Mammary epithelial cell (primary cell): ENCODE measurements at regions of chr6 and their contacts with region 1.

Region 1: GRCh38 chr6:156662025-156662445 is 115.1 kb upstream of the ARID1B start:
- DNase-seq: peak; percentile 74
- H3K4me3 ChIP-seq: peak overlapping the region; percentile 32 to 42 (median 36)
- H3K27ac ChIP-seq: no peak overlapping the region
- H3K4me1 ChIP-seq: peaks cover 3% of the 10 kb centered on the region
- H3K27me3 ChIP-seq: peaks cover 2% of the 10 kb centered on the region
- CTCF ChIP-seq: peak; percentile 82 to 95

Region 2: DNA sequence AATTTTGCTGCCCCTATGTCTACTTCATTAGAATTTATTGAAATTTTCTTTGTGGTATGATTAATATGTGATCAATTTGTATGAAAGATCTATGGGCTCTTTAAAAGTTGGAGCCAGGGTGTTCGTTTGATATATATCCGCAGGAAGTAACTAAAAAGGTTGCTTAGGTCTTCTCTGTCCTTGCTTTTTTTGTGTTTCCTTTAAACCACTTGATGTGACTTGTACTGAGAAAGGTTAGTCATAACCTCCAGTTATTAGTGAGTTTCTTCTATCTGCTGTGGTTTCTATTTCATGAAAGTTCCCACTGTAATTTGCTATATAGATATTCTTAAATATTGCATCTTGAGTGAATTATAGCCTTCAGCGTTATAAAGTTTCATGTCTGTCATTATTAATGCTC is 470.1 kb before region 1 on chr6:
- CTCF ChIA-PET with region 1: no interaction called
- dilution Hi-C with region 1: no loop called
- in situ Hi-C with region 1: no loop called
- intact Hi-C with region 1: loop called (anchors 10 kb)
- DNase-seq: no peak
- H3K4me3 ChIP-seq: no peak overlapping the region
- H3K27ac ChIP-seq: no peak overlapping the region
- H3K4me1 ChIP-seq: no peaks in the 10 kb centered on the region
- H3K27me3 ChIP-seq: no peaks in the 10 kb centered on the region
- CTCF ChIP-seq: no peak

Region 3: GRCh38 chr6:156262014-156262413 is 400.0 kb before region 1 on chr6:
- CTCF ChIA-PET with region 1: no interaction called
- dilution Hi-C with region 1: no loop called
- in situ Hi-C with region 1: no loop called
- intact Hi-C with region 1: no loop called
- DNase-seq: no peak
- H3K4me3 ChIP-seq: no peak overlapping the region
- H3K27ac ChIP-seq: no peak overlapping the region
- H3K4me1 ChIP-seq: no peaks in the 10 kb centered on the region
- H3K27me3 ChIP-seq: no peaks in the 10 kb centered on the region
- CTCF ChIP-seq: no peak